ENCODE measurements at regions of chr1 and their contacts with region 1.

Region 1: GRCh38 chr1:161738627-161739287 is 10.8 kb upstream of the DUSP12 start:
- DNase-seq: peak; percentile 22
- ATAC-seq: peak; percentile 55
- H3K4me3 Mint-ChIP-seq: no peak overlapping the region
- H3K27ac Mint-ChIP-seq: no peak overlapping the region
- H3K4me1 Mint-ChIP-seq: peaks cover 39% of the 10 kb centered on the region
- H3K27me3 Mint-ChIP-seq: no peaks in the 10 kb centered on the region
- CTCF ChIP-seq: no peak

Region 2: GRCh38 chr1:161486806-161487741 is 251.7 kb before region 1 on chr1:
- CTCF ChIA-PET with region 1: interaction called, 24 read pairs
- POLR2A ChIA-PET with region 1: no interaction called
- DNase-seq: no peak
- ATAC-seq: peak; percentile 87
- H3K4me3 Mint-ChIP-seq: no peak overlapping the region
- H3K27ac Mint-ChIP-seq: no peak overlapping the region
- H3K4me1 Mint-ChIP-seq: peaks cover 8% of the 10 kb centered on the region
- H3K27me3 Mint-ChIP-seq: peaks cover 18% of the 10 kb centered on the region
- CTCF ChIP-seq: peak; percentile 77

Region 3: GRCh38 chr1:161531986-161532643 is 206.6 kb before region 1 on chr1:
- CTCF ChIA-PET with region 1: interaction called, 13 read pairs
- POLR2A ChIA-PET with region 1: no interaction called
- DNase-seq: no peak
- ATAC-seq: no peak
- H3K4me3 Mint-ChIP-seq: peak overlapping the region; percentile 94
- H3K27ac Mint-ChIP-seq: no peak overlapping the region
- H3K4me1 Mint-ChIP-seq: peaks cover 18% of the 10 kb centered on the region
- H3K27me3 Mint-ChIP-seq: peaks cover 23% of the 10 kb centered on the region
- CTCF ChIP-seq: no peak

Region 4: DNA sequence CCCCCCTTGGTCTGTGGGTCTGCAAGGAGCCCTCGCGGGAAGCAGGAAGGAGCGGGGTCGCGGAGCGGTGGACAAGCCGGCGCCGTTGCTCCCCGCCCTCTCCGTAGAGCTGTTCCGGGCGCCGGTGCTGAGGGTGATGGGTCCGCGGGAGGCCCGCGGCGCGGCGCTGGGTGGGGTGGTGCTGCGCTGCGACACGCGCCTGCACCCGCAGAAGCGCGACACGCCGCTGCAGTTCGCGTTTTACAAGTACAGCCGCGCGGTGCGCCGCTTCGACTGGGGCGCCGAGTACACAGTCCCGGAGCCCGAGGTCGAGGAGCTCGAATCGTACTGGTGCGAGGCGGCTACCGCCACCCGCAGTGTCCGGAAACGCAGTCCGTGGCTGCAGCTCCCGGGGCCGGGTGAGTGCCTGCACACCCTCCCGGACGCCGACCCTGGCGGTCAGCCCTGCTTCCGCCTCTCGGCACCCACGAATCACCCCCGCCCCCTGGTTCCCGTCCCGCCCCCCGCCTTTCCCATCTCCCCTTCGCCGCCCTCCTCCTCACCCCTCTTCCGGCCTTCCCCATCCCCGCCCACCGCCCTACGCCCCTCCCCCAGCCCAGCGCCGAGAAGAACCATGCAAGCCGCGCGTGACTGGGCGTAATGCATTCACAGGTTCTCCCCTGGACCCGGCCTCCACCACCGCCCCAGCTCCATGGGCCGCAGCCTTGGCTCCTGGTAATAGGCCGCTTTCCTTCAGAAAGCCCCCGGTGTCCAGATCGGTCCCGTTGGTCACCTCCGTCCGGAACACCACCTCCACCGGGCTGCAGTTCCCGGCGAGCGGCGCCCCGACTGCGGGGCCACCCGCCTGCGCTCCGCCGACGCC is 11.9 kb before region 1 on chr1:
- CTCF ChIA-PET with region 1: interaction called, 23 read pairs
- POLR2A ChIA-PET with region 1: no interaction called
- DNase-seq: peak; percentile 81
- ATAC-seq: peak; percentile 78
- H3K4me3 Mint-ChIP-seq: peak overlapping the region; percentile 90
- H3K27ac Mint-ChIP-seq: no peak overlapping the region
- H3K4me1 Mint-ChIP-seq: peaks cover 34% of the 10 kb centered on the region
- H3K27me3 Mint-ChIP-seq: peaks cover 67% of the 10 kb centered on the region
- CTCF ChIP-seq: no peak

Region 5: GRCh38 chr1:161749509-161750407 is 11.0 kb after region 1 on chr1 and contains the start of gene DUSP12:
- CTCF ChIA-PET with region 1: interaction called, 12 read pairs
- POLR2A ChIA-PET with region 1: interaction called, 3 read pairs
- DNase-seq: peak; percentile 95
- ATAC-seq: peak; percentile 97
- H3K4me3 Mint-ChIP-seq: peak within 1 kb of the TSS; percentile 99
- H3K27ac Mint-ChIP-seq: peak within 1 kb of the TSS; percentile 99
- H3K4me1 Mint-ChIP-seq: peaks cover 15% of the 10 kb centered on the region
- H3K27me3 Mint-ChIP-seq: peaks cover 9% of the 10 kb centered on the region
- CTCF ChIP-seq: no peak
- total RNA-seq, gene DUSP12: 24.5 to 29.4 TPM (median 27.6 TPM) in 3 replicates

Region 6: DNA sequence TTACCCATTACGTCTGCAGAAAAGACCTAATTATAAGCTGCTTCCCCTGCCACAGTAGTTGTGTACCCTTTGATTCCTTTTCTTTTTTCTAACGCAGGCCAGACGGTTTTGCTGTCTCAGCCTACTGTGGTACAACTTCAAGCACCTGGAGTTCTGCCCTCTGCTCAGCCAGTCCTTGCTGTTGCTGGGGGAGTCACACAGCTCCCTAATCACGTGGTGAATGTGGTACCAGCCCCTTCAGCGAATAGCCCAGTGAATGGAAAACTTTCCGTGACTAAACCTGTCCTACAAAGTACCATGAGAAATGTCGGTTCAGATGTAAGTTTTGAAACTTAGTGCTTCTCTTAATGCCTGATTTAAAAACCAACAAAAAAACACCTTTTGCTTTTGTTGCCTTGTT is 63.2 kb after region 1 on chr1:
- CTCF ChIA-PET with region 1: no interaction called
- POLR2A ChIA-PET with region 1: no interaction called
- DNase-seq: peak; percentile 22
- ATAC-seq: peak; percentile 94
- H3K4me3 Mint-ChIP-seq: no peak overlapping the region
- H3K27ac Mint-ChIP-seq: peak overlapping the region; percentile 19; the same call in 1 of the 2 replicates
- H3K4me1 Mint-ChIP-seq: peaks cover 6% of the 10 kb centered on the region
- H3K27me3 Mint-ChIP-seq: no peaks in the 10 kb centered on the region
- CTCF ChIP-seq: no peak

Region 7: DNA sequence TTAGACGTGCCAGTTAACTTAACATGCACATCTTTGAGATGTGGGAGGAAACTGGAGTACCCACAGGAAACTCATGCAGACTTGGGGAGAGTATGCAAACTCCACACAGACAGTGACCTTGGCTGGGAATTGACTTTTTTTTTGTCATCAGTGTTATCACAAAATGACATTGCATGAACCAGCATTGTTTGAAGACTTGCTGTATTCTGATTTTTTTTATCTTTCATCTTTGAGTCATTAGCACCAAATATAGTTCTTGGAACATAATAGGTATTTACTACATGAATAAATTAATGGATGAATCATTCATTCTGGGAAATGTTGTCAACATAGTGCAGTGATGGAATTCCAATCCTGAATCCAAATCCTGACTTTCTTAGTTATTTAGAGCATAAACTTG is 104.4 kb after region 1 on chr1:
- CTCF ChIA-PET with region 1: no interaction called
- POLR2A ChIA-PET with region 1: no interaction called
- DNase-seq: no peak
- ATAC-seq: no peak
- H3K4me3 Mint-ChIP-seq: no peak overlapping the region
- H3K27ac Mint-ChIP-seq: no peak overlapping the region
- H3K4me1 Mint-ChIP-seq: no peaks in the 10 kb centered on the region; the same call in 1 of the 2 replicates
- H3K27me3 Mint-ChIP-seq: no peaks in the 10 kb centered on the region
- CTCF ChIP-seq: no peak

Measured in WTC11 (cell line).